Activated T-helper 1 cell treated with anti-CD3 and anti-CD28 coated beads, Interleukin-12 subunit alpha, Interleukin-12 subunit beta, Interleukin-2, Interleukin-4 antibody, amounts not matched to agents 30 ng/mL and 10 ng/mL and 1 ng/mL, durations not matched to agents 14 hours and 24 hours and 36 hours (primary cell): ENCODE measurements at regions of chrX and their contacts with region 1.

Region 1: DNA sequence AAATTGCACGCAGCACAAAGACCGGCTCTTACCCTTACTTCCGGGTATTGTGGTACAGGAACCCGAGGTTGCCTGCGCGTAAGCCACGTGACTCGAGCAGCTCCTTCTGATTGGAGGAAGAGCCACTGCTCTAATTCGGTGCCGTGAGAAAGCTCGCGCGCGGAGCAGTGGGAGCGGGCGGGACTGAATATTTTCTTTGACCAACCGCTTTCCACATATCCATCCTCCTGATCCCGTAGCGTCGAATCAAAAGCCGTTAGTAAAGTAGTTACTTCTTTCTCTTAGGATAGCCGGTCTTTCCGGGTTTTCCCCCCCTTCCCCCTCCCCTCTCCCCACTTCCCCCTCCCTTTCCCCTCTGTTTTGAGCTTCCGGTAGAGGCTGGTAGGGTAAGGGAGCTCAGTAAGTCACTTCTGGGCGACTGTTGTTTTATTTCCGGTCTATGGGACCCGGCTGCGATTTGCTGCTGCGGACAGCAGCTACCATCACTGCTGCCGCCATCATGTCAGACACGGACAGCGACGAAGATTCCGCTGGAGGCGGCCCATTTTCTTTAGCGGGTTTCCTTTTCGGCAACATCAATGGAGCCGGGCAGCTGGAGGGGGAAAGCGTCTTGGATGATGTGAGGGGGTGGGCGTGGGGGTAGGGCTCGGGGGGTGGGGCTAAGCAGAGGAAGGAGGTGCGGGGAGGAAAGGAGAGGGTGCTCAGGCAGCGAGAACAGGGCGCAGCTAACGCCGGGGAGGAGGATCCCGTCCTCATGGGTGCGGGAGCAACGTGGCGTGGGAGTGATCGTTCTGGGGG is at the start of gene TAF1:
- DNase-seq: peak; percentile 88
- H3K4me3 Mint-ChIP-seq: peak within 1 kb of the TSS; percentile 97
- H3K27ac Mint-ChIP-seq: peak within 1 kb of the TSS; percentile 99
- H3K4me1 Mint-ChIP-seq: peaks cover 21% of the 10 kb centered on the region
- H3K27me3 Mint-ChIP-seq: no peaks in the 10 kb centered on the region
- total RNA-seq, gene TAF1: 41.4 and 46.1 TPM in 2 replicates

Region 2: DNA sequence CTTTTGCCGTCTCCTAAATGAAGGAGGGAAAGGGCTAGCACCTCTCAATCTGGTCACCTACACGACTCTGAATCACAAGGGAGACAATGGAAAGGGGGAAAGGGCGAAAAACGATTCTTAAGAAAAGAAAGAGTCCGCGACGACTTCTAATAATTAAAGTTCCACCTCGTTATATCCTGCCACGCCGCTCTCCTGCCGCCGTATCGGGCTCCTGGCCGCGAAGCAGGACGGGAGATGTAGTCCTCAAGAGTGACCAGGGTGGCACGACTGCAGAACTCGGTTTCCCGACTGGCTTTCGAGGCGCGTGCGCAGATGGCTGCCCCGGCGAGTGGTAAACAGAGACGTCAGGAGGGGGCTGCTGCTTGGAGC is 270.5 kb before region 1 on chrX and contains the start of gene FOXO4:
- intact Hi-C with region 1: loop called (anchors 1 kb)
- DNase-seq: peak; percentile 81
- H3K4me3 Mint-ChIP-seq: peak within 1 kb of the TSS; percentile 93
- H3K27ac Mint-ChIP-seq: peak within 1 kb of the TSS; percentile 91
- H3K4me1 Mint-ChIP-seq: peaks cover 33% of the 10 kb centered on the region
- H3K27me3 Mint-ChIP-seq: peaks cover 8% of the 10 kb centered on the region
- total RNA-seq, gene FOXO4: 10.7 and 11.9 TPM in 2 replicates

Region 3: GRCh38 chrX:71111141-71111843 is 254.8 kb before region 1 on chrX and contains the start of gene IL2RG:
- intact Hi-C with region 1: loop called (anchors 5 kb)
- DNase-seq: peak; percentile 75
- H3K4me3 Mint-ChIP-seq: peak within 1 kb of the TSS; percentile 99
- H3K27ac Mint-ChIP-seq: peak within 1 kb of the TSS; percentile 92
- H3K4me1 Mint-ChIP-seq: peaks cover 52% of the 10 kb centered on the region
- H3K27me3 Mint-ChIP-seq: no peaks in the 10 kb centered on the region
- total RNA-seq, gene IL2RG: 375 and 397 TPM in 2 replicates

Region 4: DNA sequence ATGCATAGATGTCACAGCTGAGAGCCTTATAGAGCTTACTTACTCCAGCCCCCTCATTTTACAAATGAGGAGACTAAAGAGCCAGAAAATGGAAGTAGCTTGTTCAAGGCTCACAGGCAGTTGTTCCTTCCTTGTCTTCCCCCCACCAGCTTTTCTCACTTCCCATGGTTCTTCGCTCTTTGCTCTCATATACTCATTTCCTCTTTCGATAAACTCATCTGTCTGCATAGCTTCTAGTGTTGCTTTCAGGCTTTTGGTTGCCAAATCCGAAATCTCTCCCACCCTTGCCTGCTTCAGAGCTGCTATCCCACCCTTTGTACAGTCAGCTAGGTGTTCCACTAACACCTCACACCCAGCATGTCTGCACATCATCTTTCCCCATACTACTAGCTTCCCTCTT is 168.0 kb before region 1 on chrX:
- intact Hi-C with region 1: loop called (anchors 5 kb)
- DNase-seq: no peak
- H3K4me3 Mint-ChIP-seq: peak overlapping the region; percentile 94
- H3K27ac Mint-ChIP-seq: peak overlapping the region; percentile 92
- H3K4me1 Mint-ChIP-seq: peaks cover 21% of the 10 kb centered on the region
- H3K27me3 Mint-ChIP-seq: no peaks in the 10 kb centered on the region

Region 5: GRCh38 chrX:71254092-71254941 is 111.8 kb before region 1 on chrX and contains the start of gene ZMYM3:
- intact Hi-C with region 1: loop called (anchors 1 kb)
- DNase-seq: peak; percentile 69
- H3K4me3 Mint-ChIP-seq: peak within 1 kb of the TSS; percentile 88
- H3K27ac Mint-ChIP-seq: peak within 1 kb of the TSS; percentile 71
- H3K4me1 Mint-ChIP-seq: peaks cover 30% of the 10 kb centered on the region
- H3K27me3 Mint-ChIP-seq: no peaks in the 10 kb centered on the region
- total RNA-seq, gene ZMYM3: 12.6 and 13.2 TPM in 2 replicates

Region 6: DNA sequence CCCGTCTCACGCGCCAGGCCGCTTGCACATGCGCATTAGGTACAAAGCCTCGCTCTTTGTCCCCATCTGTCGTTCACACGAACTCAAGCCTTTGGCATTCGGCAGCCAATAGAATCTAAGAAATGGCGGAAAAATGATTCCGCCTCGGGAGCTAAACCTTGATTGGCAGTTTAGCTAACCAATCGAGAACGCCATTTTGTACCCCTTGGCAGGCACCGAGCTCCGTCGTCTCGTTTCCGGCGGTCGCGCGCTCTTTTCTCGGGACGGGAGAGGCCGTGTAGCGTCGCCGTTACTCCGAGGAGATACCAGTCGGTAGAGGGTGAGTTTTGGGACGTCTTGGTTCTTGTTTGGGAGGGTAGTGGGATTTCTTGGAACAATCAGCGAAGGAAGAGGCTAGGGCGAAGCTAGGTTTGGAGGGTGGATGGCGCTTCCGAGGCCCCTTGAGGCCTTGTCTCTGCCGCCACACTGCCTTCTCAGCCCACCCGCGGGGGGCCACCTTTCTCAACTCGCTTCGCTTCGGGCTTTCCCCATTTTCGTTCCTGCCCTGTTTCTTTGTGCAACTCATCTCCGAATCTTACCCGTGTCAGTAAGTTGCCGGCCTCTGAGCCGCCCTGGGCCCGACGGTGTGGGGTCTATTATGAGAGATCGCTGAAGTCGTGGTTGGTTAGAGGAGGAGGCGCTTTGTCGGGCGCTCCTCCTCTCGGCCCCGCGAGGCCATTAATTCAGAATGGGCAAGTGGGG is 82.5 kb before region 1 on chrX and contains the start of gene NONO:
- intact Hi-C with region 1: loop called (anchors 1 kb)
- DNase-seq: peak; percentile 84
- H3K4me3 Mint-ChIP-seq: peak within 1 kb of the TSS; percentile 94
- H3K27ac Mint-ChIP-seq: peak within 1 kb of the TSS; percentile 98
- H3K4me1 Mint-ChIP-seq: peaks cover 15% of the 10 kb centered on the region
- H3K27me3 Mint-ChIP-seq: no peaks in the 10 kb centered on the region
- total RNA-seq, gene NONO: 512 and 546 TPM in 2 replicates

Region 7: GRCh38 chrX:71532753-71533425 is 166.8 kb after region 1 on chrX and contains the start of gene OGT:
- intact Hi-C with region 1: loop called (anchors 1 kb)
- DNase-seq: peak; percentile 88
- H3K4me3 Mint-ChIP-seq: peak within 1 kb of the TSS; percentile 95
- H3K27ac Mint-ChIP-seq: peak within 1 kb of the TSS; percentile 100
- H3K4me1 Mint-ChIP-seq: peaks cover 26% of the 10 kb centered on the region
- H3K27me3 Mint-ChIP-seq: no peaks in the 10 kb centered on the region
- total RNA-seq, gene OGT: 295 and 305 TPM in 2 replicates

Region 8: GRCh38 chrX:71586929-71587328 is 220.9 kb after region 1 on chrX:
- intact Hi-C with region 1: no loop called
- DNase-seq: no peak
- H3K4me3 Mint-ChIP-seq: no peak overlapping the region
- H3K27ac Mint-ChIP-seq: peak overlapping the region; percentile 80
- H3K4me1 Mint-ChIP-seq: no peaks in the 10 kb centered on the region
- H3K27me3 Mint-ChIP-seq: no peaks in the 10 kb centered on the region